ENCODE measurements at regions of chr6 and their contacts with region 1.

Region 1: DNA sequence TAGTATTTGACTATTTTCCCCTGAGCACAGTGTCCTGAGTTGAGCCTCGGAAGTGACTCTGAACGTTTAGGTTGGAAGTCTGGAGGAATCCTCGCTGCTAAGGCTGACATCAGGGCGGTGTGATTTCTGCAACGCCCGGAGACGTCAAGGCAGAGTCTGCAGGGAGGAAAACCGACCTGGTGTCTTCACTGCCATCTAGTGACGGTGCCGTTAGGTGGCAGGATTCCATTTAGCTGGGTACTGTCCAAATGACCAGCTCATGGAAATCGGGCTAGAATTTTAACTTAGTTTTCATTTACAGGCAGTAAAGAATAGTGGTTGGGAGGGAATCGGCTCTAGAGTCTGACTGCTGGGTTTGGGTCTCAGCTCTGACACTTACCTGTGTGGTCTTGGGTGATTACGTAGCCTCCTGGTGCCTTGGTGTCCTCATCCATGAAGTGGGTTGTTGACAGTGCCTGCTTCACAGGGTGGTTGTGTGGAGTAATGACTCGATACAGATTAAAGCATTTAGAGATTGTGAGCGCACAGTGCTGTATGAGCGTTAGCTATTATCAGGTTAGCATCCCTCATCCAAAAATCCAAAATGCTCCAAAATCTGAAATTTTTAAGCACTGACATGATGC is 35.0 kb downstream of the FOXF2 start:
- DNase-seq: peak; percentile 78
- H3K4me3 Mint-ChIP-seq: no peak overlapping the region
- H3K27ac Mint-ChIP-seq: no peak overlapping the region
- H3K4me1 Mint-ChIP-seq: peaks cover 6% of the 10 kb centered on the region
- H3K27me3 Mint-ChIP-seq: peaks cover 26% of the 10 kb centered on the region
- CTCF ChIP-seq: peak; percentile 69

Region 2: GRCh38 chr6:722077-722524 is 702.3 kb before region 1 on chr6:
- CTCF ChIA-PET with region 1: interaction called, 3 read pairs
- POLR2A ChIA-PET with region 1: no interaction called
- intact Hi-C with region 1: loop called (anchors 5 kb)
- DNase-seq: peak; percentile 87
- H3K4me3 Mint-ChIP-seq: no peak overlapping the region
- H3K27ac Mint-ChIP-seq: no peak overlapping the region
- H3K4me1 Mint-ChIP-seq: no peaks in the 10 kb centered on the region
- H3K27me3 Mint-ChIP-seq: peaks cover 12% of the 10 kb centered on the region
- CTCF ChIP-seq: peak; percentile 74

Region 3: GRCh38 chr6:912871-913835 is 511.3 kb before region 1 on chr6:
- CTCF ChIA-PET with region 1: interaction called, 13 read pairs
- POLR2A ChIA-PET with region 1: no interaction called
- intact Hi-C with region 1: no loop called
- DNase-seq: peak; percentile 48
- H3K4me3 Mint-ChIP-seq: no peak overlapping the region
- H3K27ac Mint-ChIP-seq: no peak overlapping the region
- H3K4me1 Mint-ChIP-seq: no peaks in the 10 kb centered on the region
- H3K27me3 Mint-ChIP-seq: peaks cover 12% of the 10 kb centered on the region
- CTCF ChIP-seq: peak; percentile 77

Region 4: DNA sequence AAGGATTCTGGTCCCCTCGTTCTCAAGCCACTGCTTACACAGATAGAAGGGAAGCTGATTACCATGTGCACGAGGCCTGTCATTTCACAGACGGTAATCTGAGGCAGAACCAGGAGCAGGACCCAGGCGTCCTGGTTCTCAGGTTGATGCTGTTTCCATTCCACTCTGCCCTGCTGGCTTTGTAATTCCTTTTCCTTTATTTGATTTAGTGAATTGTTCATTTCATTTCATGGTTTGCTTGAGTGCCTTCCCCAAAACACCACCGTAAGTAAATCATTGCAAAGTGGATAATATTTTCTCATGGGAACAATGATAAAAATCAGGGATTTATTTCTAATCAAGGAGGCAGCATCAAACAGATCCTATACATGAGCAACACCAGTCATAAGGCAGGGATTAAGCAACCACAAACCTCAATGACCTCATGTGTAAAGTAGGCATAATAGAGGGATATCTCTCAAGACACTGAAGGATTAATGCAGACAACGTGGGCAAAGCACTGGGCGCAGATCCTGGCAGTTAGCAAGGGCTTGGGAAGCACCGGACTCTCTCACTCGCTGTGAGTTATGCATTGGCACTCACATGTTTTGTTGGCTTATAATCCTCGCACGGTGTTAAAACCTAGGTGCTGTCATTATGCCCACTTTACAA is 342.0 kb before region 1 on chr6:
- CTCF ChIA-PET with region 1: no interaction called
- POLR2A ChIA-PET with region 1: no interaction called
- intact Hi-C with region 1: no loop called
- DNase-seq: peak; percentile 73
- H3K4me3 Mint-ChIP-seq: peak overlapping the region; percentile 44
- H3K27ac Mint-ChIP-seq: peak overlapping the region; percentile 73
- H3K4me1 Mint-ChIP-seq: peaks cover 16% of the 10 kb centered on the region
- H3K27me3 Mint-ChIP-seq: no peaks in the 10 kb centered on the region
- CTCF ChIP-seq: no peak

Region 5: DNA sequence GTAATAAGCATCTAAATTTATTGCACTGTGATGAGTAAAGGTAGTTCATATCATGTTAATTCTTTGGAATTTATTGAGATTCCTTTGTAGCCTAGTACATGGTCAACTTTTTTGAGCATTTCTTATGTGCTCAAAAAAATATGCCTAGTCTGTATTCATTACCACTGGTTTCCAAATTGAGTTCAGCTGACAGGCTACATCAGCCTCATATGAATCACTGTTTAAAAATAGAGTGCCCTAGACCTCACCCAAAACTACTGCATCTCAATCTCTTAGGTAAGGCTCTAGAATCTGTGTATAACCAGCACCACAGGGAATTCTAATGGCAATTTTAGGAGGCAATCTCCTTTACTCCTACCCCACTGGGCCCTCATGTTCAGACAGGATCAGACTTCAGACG is 51.7 kb before region 1 on chr6:
- CTCF ChIA-PET with region 1: no interaction called
- POLR2A ChIA-PET with region 1: no interaction called
- intact Hi-C with region 1: no loop called
- DNase-seq: no peak
- H3K4me3 Mint-ChIP-seq: no peak overlapping the region
- H3K27ac Mint-ChIP-seq: no peak overlapping the region
- H3K4me1 Mint-ChIP-seq: no peaks in the 10 kb centered on the region
- H3K27me3 Mint-ChIP-seq: no peaks in the 10 kb centered on the region
- CTCF ChIP-seq: no peak

Region 6: DNA sequence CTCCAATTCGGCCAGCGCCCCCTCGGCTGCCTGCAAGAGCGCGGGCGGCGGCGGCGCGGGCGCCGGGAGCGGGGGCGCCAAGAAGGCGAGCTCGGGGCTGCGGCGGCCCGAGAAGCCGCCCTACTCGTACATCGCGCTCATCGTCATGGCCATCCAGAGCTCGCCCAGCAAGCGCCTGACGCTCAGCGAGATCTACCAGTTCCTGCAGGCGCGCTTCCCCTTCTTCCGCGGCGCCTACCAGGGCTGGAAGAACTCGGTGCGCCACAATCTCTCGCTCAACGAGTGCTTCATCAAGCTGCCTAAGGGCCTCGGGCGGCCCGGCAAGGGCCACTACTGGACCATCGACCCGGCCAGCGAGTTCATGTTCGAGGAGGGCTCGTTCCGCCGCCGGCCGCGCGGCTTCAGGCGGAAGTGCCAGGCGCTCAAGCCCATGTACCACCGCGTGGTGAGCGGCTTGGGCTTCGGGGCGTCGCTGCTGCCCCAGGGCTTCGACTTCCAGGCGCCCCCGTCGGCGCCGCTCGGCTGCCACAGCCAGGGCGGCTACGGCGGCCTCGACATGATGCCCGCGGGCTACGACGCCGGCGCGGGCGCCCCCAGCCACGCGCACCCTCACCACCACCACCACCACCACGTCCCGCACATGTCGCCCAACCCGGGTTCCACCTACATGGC is 34.1 kb before region 1 on chr6:
- CTCF ChIA-PET with region 1: interaction called, 12 read pairs
- POLR2A ChIA-PET with region 1: interaction called, 3 read pairs
- intact Hi-C with region 1: no loop called
- DNase-seq: peak; percentile 60
- H3K4me3 Mint-ChIP-seq: peak overlapping the region; percentile 80
- H3K27ac Mint-ChIP-seq: peak overlapping the region; percentile 39
- H3K4me1 Mint-ChIP-seq: peaks cover 12% of the 10 kb centered on the region
- H3K27me3 Mint-ChIP-seq: no peaks in the 10 kb centered on the region
- CTCF ChIP-seq: no peak

Region 7: DNA sequence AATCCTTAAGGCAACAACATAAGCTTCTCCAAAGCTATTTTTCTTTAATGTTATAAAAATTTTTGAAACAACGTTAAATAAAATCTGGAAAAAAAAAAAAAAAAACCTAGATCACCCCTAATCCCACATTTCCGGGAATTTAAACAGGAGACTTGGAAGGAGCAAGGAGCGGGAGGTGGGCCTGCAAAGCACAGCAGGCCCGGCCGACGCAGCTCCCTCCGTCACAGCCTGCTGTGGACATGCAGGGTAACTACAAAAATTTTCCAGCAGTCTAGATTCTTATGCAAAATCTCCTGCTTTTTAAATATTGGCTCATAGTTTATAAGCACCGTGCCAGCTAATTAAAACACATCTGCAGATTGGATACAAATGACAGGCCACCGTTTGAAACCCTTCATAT is 11.5 kb before region 1 on chr6:
- CTCF ChIA-PET with region 1: interaction called, 17 read pairs
- POLR2A ChIA-PET with region 1: no interaction called
- intact Hi-C with region 1: no loop called
- DNase-seq: no peak
- H3K4me3 Mint-ChIP-seq: no peak overlapping the region
- H3K27ac Mint-ChIP-seq: no peak overlapping the region
- H3K4me1 Mint-ChIP-seq: no peaks in the 10 kb centered on the region
- H3K27me3 Mint-ChIP-seq: no peaks in the 10 kb centered on the region
- CTCF ChIP-seq: no peak

Measured in MCF 10A (cell line).